ENCODE measurements at regions of chr11 and their contacts with region 1.

Region 1: GRCh38 chr11:17267561-17267960 is 9.0 kb upstream of the NUCB2 start:
- DNase-seq: peak; percentile 90
- ATAC-seq: peak; percentile 92
- H3K4me3 ChIP-seq: no peak overlapping the region
- H3K27ac ChIP-seq: no peak overlapping the region
- H3K4me1 ChIP-seq: no peaks in the 10 kb centered on the region
- H3K27me3 ChIP-seq: no peaks in the 10 kb centered on the region
- CTCF ChIP-seq: no peak

Region 2: DNA sequence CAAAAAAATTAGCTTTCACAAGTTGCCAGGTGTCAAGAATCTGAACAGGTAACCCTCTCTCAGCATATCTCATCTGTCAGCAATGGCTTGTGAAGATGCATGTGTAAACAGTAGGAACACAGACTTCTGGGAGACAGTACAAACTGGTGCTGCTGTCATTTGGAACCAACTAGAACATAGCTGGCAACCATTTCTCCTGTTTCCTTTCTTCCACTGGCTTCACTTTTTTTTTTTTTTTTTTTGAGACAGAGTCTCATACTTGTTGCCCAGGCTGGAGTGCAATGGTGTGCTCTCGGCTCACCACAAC is 57.7 kb before region 1 on chr11:
- CTCF ChIA-PET with region 1: no interaction called
- POLR2A ChIA-PET with region 1: interaction called, 13 read pairs
- in situ Hi-C with region 1: no loop called
- intact Hi-C with region 1: no loop called
- DNase-seq: no peak
- ATAC-seq: no peak
- H3K4me3 ChIP-seq: no peak overlapping the region
- H3K27ac ChIP-seq: no peak overlapping the region
- H3K4me1 ChIP-seq: peaks cover 16% of the 10 kb centered on the region
- H3K27me3 ChIP-seq: no peaks in the 10 kb centered on the region
- CTCF ChIP-seq: no peak

Region 3: GRCh38 chr11:17256512-17256911 is 11.0 kb before region 1 on chr11:
- CTCF ChIA-PET with region 1: no interaction called
- POLR2A ChIA-PET with region 1: interaction called, 15 read pairs
- in situ Hi-C with region 1: no loop called
- intact Hi-C with region 1: no loop called
- DNase-seq: no peak
- ATAC-seq: peak; percentile 80
- H3K4me3 ChIP-seq: no peak overlapping the region
- H3K27ac ChIP-seq: no peak overlapping the region
- H3K4me1 ChIP-seq: no peaks in the 10 kb centered on the region
- H3K27me3 ChIP-seq: no peaks in the 10 kb centered on the region
- CTCF ChIP-seq: no peak